ENCODE measurements at regions of chr21 and their contacts with region 1.

Region 1: GRCh38 chr21:45420061-45420985 is 15.4 kb downstream of the COL18A1 start:
- DNase-seq: peak in 1 of 2 donors; percentile 91
- H3K4me3 ChIP-seq: peak overlapping the region; percentile 28 to 34
- H3K27ac ChIP-seq: peak overlapping the region; percentile 89 to 98
- H3K4me1 ChIP-seq: peaks cover 0 to 100% (median 88%) of the 10 kb centered on the region in 4 donors
- H3K27me3 ChIP-seq: no peaks in the 10 kb centered on the region
- CTCF ChIP-seq: no peak

Region 2: DNA sequence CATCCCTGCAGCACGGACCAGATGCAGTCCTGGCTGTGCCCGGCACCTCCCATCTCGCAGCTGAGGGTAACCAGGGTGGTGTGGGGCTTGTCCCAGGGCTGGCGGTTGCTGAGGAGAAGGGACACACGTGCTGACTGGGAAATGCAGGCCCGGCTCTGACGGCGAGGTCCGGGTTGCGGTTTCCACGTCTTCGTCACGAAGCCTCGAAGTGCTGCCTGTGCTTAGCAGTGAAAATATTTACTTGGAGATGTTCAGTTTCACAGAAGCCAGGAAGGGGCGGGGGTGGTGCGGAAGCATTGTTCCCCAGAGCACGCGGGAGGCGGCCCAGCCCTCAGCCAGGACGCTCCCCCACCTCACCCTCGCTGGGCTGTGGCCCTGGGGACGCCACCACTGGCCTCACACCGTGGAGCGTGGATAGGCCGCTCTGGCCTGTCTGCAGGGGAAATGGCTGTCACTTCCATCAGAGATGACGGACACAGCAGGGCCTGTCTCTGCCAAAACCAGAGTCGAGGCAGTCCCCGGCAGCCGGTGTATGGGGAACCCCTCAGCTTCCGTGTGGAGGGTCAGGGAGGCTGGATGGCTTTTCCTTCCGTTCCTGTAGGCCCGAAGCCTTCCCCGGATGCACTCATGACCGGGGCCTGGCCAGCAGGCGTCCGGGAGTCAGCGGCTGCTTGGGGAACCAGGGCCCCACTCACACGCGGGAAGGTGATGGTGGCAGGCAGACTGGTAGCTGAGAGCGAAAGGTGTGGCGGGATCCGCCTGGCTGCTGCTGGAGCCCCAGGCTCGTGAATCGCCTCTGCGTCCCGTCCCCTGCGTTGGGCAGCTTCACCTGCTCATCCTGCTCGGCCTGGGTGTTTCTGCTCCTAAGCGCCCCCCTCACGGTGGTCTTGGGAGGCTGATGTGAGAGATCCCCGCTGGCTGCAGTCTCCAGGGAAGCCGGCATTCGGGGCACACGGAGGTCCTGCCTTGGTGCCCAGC is 118.0 kb before region 1 on chr21:
- intact Hi-C with region 1: loop called (anchors 5 kb)
- DNase-seq: peak; percentile 67 to 77
- H3K4me3 ChIP-seq: no peak overlapping the region
- H3K27ac ChIP-seq: peak overlapping the region; percentile 94 to 98
- H3K4me1 ChIP-seq: peaks cover 0 to 51% (median 36%) of the 10 kb centered on the region in 4 donors
- H3K27me3 ChIP-seq: no peaks in the 10 kb centered on the region
- CTCF ChIP-seq: no peak

Region 3: GRCh38 chr21:46461909-46462308 is 1041.6 kb after region 1 on chr21:
- intact Hi-C with region 1: no loop called
- DNase-seq: no peak
- H3K4me3 ChIP-seq: no peak overlapping the region
- H3K27ac ChIP-seq: no peak overlapping the region
- H3K4me1 ChIP-seq: peaks cover 0 to 20% (median 16%) of the 10 kb centered on the region in 4 donors
- H3K27me3 ChIP-seq: no peaks in the 10 kb centered on the region
- CTCF ChIP-seq: no peak

Measured in tibial artery (tissue), 4 donors.